PC-3 (cell line): ENCODE measurements at regions of chr14 and their contacts with region 1.

Region 1: DNA sequence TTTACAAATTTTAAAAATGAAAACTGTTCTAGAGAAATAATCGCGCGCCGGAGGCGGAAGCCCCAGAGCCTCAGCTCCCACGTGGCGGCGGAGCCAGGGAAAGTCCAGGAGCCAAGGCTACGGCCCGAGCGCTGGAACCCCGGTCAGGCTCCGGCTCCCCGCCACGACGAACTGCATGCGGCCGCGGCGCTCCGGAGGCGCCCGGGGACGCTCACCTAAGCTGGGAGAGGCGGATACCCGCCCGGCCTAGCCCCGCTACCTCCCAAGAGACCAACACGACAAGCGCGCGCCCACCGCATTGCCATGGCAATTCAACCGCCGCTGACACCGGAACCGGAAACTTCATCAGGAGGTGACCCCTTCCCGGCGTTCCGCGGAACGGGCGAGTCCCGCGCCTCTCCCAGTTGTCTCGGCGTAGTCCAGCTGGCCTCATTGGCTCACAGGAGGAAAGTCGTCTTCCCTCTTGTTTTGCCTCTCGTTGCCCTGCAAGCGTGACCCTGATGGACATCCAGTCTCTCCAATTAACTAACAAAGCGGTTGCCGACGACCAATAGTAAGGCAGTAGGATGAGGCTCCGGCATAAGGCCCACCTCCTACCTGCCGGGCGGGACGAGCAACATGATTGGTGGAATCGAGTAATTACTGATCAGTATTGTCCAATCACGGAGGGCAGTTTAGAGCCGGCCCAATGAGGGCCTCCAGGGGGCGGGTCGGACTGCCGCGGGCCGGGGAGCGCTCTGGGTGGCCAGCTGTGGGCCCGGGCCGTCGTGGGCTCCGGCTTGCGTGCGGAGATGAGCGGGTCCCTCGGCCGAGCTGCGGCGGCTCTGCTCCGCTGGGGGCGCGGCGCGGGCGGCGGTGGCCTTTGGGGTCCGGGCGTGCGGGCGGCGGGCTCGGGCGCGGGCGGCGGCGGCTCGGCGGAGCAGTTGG is at the start of gene GLRX5:
- DNase-seq: peak; percentile 99
- ATAC-seq: peak; percentile 90
- H3K4me3 ChIP-seq: peak within 1 kb of the TSS; percentile 98
- H3K27ac ChIP-seq: peak within 1 kb of the TSS; percentile 81
- H3K4me1 ChIP-seq: peaks cover 46% of the 10 kb centered on the region
- H3K27me3 ChIP-seq: no peaks in the 10 kb centered on the region
- CTCF ChIP-seq: no peak
- total RNA-seq, gene GLRX5: 60.0 and 64.3 TPM in 2 replicates

Region 2: DNA sequence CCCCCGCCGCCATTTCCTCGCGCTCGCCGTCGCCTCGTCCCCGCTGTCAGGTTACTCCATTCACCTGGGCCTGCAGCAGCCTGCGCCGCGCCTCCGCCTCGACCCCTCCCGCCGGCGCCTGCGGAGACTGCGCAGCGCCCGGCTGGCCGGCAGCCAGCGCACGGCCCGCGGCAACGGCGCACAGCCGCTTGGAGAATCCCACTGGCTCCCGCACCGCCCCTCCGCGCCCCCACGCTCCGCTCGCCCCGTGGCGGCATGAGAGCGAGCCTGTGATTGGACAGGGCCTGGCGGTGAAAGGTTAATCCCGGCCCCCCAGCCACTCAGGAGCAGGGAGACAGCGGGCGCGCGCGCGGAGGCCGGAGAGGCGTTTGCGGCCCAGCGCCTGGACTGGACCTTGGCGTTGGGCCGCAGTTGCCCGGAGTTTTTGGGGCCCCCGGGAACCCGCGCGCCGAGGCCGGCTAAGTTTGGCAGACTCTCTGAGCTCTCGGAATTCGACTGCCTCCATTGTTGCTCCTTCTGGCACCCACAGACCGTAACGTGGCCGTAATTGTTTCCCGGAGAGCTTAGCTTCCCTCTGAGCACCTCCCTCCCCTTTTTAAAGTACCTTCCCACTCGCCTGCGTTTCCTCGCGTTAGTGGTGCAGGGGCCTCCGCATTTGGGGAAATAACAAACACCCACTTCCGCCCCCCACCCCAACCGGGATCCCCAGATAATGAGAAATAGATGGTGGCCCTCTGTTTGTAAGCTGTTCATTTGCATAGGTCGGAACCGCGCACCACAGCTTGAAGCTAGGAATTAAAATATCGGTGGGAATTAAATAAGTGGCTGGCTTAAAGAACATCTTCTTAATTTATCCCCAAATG is 377.0 kb before region 1 on chr14 and contains the start of gene DICER1:
- CTCF ChIA-PET with region 1: no interaction called
- POLR2A ChIA-PET with region 1: no interaction called
- intact Hi-C with region 1: loop called (anchors 5 kb)
- DNase-seq: peak; percentile 96
- ATAC-seq: peak; percentile 77
- H3K4me3 ChIP-seq: peak within 1 kb of the TSS; percentile 88
- H3K27ac ChIP-seq: peak within 1 kb of the TSS; percentile 59
- H3K4me1 ChIP-seq: peaks cover 33% of the 10 kb centered on the region
- H3K27me3 ChIP-seq: no peaks in the 10 kb centered on the region
- CTCF ChIP-seq: no peak
- total RNA-seq, gene DICER1: 29.9 and 36.3 TPM in 2 replicates

Region 3: DNA sequence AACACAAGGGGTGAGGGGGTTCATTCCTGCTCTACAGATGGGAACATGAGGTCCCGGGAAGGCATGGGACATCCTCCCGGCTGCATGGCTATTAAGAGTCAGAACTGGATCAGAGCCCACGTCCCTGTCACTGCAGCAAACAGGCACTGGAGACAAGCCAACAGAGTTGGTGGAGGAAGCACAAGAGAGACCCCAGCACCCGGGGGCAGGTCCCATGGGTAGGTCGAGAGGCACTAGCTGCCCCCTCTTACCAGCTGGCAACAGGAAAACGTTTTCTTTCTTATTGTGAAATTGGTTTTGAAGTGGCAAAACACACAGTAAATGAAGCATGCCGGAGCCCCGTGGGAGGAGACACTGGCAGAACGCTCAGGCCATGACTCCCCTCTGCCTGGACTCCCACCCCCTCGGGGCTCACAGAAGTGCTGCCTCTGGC is 61.7 kb before region 1 on chr14:
- CTCF ChIA-PET with region 1: no interaction called
- POLR2A ChIA-PET with region 1: no interaction called
- intact Hi-C with region 1: no loop called
- DNase-seq: no peak
- ATAC-seq: no peak
- H3K4me3 ChIP-seq: no peak overlapping the region
- H3K27ac ChIP-seq: no peak overlapping the region
- H3K4me1 ChIP-seq: no peaks in the 10 kb centered on the region; the same call in 1 of the 2 replicates
- H3K27me3 ChIP-seq: no peaks in the 10 kb centered on the region
- CTCF ChIP-seq: no peak

Region 4: DNA sequence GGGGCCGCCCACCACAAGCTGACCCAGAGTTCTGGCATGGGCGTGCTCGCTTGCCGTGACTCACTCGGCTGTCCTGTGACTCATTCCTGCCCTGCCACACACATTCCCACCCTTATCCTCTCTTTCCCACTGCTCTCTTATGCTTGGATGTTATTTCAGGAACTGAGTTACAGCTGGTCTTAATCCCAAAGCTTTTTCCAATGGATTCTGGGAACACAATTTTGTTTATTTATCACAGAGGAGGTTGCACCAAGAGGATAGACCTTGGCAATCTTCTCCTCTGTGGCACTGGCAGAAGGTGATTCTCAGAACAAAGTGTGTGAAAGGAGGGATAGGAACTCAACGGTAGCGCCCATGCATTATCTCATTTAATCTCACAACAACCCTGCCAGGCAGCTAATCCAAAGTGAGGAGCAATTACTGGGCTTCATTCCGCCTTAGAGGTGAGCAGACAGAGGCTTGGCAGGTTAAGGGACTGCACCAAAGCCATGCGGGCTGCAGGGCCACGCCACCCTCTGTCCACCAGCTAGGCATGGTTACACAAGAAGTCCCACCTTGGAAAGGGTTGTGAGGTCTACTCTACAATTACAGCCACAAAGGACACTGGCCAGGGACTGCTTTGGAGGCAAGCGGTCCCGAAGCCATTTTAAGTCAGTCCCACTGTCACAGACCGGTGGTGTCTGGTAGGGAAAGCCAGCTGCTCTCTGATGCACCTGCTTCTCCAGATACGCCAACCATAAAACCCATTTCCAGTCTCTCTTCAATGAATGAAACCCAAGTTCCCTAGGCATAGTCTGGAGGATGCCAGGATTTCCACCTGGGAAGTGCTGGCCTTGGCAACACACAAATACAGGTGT is 51.0 kb before region 1 on chr14:
- CTCF ChIA-PET with region 1: no interaction called
- POLR2A ChIA-PET with region 1: no interaction called
- intact Hi-C with region 1: loop called (anchors 10 kb)
- DNase-seq: peak; percentile 82
- ATAC-seq: peak; percentile 95
- H3K4me3 ChIP-seq: no peak overlapping the region
- H3K27ac ChIP-seq: peak overlapping the region; percentile 77
- H3K4me1 ChIP-seq: peaks cover 28% of the 10 kb centered on the region
- H3K27me3 ChIP-seq: no peaks in the 10 kb centered on the region
- CTCF ChIP-seq: no peak

Region 5: GRCh38 chr14:95507701-95508103 is 26.9 kb before region 1 on chr14:
- CTCF ChIA-PET with region 1: no interaction called
- POLR2A ChIA-PET with region 1: no interaction called
- intact Hi-C with region 1: loop called (anchors 1 kb)
- DNase-seq: peak; percentile 78
- ATAC-seq: peak; percentile 84
- H3K4me3 ChIP-seq: peak overlapping the region; percentile 28; the same call in 1 of the 2 replicates
- H3K27ac ChIP-seq: peak overlapping the region; percentile 92
- H3K4me1 ChIP-seq: peaks cover 23% of the 10 kb centered on the region
- H3K27me3 ChIP-seq: no peaks in the 10 kb centered on the region
- CTCF ChIP-seq: no peak

Region 6: DNA sequence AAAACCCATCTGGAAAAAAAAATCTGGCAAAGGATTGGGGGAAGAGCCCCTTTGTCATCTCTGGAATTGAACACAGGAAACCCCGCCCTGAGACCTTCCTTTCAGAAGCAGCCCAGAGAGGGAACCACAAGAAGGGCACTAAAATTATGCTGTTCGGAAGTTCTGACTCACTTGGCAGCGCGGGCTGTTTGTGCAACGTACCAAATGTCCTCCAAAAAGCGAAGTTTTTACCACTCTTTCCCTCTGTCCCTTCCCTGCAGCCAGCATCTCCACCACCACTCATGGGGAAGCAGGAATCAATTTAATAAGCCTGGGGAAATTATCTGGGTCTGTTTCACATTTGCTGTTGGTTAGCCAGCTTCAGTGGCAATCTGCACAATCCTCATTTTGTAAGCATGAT is 14.9 kb before region 1 on chr14:
- CTCF ChIA-PET with region 1: no interaction called
- POLR2A ChIA-PET with region 1: no interaction called
- intact Hi-C with region 1: no loop called
- DNase-seq: peak; percentile 79
- ATAC-seq: peak; percentile 54
- H3K4me3 ChIP-seq: peak overlapping the region; percentile 16; the same call in 1 of the 2 replicates
- H3K27ac ChIP-seq: peak overlapping the region; percentile 9; the same call in 1 of the 2 replicates
- H3K4me1 ChIP-seq: peaks cover 26% of the 10 kb centered on the region
- H3K27me3 ChIP-seq: no peaks in the 10 kb centered on the region
- CTCF ChIP-seq: no peak